Activated naive CD4-positive, alpha-beta T cell treated with anti-CD3 and anti-CD28 coated beads for 36 hours (primary cell): ENCODE measurements at regions of chr11 and their contacts with region 1.

Region 1: GRCh38 chr11:119334174-119334930 is at the start of gene RNF26:
- DNase-seq: peak; percentile 98
- H3K4me3 Mint-ChIP-seq: peak within 1 kb of the TSS; percentile 93
- H3K27ac Mint-ChIP-seq: peak within 1 kb of the TSS; percentile 91
- H3K4me1 Mint-ChIP-seq: peaks cover 31% of the 10 kb centered on the region
- H3K27me3 Mint-ChIP-seq: peaks cover 5% of the 10 kb centered on the region
- total RNA-seq, gene RNF26: 46.1 to 47.0 TPM

Region 2: GRCh38 chr11:119134389-119134978 is 199.9 kb before region 1 on chr11:
- CTCF ChIA-PET with region 1: no interaction called
- intact Hi-C with region 1: no loop called
- DNase-seq: no peak
- H3K4me3 Mint-ChIP-seq: no peak overlapping the region
- H3K27ac Mint-ChIP-seq: no peak overlapping the region
- H3K4me1 Mint-ChIP-seq: peaks cover 2% of the 10 kb centered on the region
- H3K27me3 Mint-ChIP-seq: peaks cover 3% of the 10 kb centered on the region

Region 3: GRCh38 chr11:119306373-119306890 is 27.9 kb before region 1 on chr11:
- CTCF ChIA-PET with region 1: interaction called, 15 read pairs
- intact Hi-C with region 1: loop called (anchors 2 kb)
- DNase-seq: peak; percentile 74
- H3K4me3 Mint-ChIP-seq: peak overlapping the region; percentile 60
- H3K27ac Mint-ChIP-seq: peak overlapping the region; percentile 93
- H3K4me1 Mint-ChIP-seq: peaks cover 32% of the 10 kb centered on the region
- H3K27me3 Mint-ChIP-seq: no peaks in the 10 kb centered on the region

Region 4: DNA sequence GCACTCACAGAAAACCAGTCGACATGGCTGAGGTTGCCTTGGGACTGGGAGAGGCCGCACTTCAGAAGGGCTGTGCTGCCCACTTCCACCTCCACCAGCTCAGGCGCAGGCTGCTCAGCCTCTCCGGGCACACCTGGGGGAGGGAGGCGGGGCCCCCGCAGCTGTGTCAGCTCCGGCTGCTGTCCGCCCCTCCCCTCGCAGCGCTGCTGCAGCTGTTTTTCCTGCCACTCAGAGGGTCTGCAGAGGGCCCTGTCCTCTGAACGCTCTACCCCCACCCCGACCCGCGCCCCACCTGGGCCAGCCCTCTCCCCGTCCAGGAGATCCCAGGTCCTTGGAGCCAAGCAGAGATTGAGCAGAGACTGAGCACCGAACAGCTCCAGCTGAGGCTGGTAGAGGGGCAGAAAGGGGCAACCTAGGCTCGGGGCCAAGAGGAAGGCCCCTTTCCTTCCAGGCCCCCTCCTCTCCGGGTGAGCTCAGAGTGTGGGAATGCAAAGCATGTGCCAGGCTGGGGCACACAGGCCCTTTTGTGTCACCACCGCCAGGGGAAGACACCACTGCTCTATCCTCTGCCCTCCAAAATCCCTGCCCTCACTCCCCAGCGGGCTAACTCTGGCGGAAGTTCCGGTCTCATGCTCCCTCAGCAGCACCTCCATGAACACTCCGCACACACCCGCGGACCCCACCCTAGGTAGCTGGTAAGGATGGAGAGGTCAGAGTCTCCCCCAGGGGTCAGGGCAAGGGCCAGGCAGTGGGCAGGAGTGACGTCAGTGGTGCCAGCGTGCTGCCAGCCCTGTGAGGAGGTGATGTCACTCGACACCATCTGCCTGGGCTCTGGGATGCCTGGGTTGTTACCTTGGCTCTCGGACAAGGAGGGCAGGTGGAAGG is 19.0 kb before region 1 on chr11:
- CTCF ChIA-PET with region 1: interaction called, 70 read pairs
- intact Hi-C with region 1: loop called (anchors 2 kb)
- DNase-seq: peak; percentile 62
- H3K4me3 Mint-ChIP-seq: peak overlapping the region; percentile 73
- H3K27ac Mint-ChIP-seq: no peak overlapping the region
- H3K4me1 Mint-ChIP-seq: peaks cover 15% of the 10 kb centered on the region
- H3K27me3 Mint-ChIP-seq: peaks cover 22% of the 10 kb centered on the region

Region 5: GRCh38 chr11:119381181-119381988 is 47.0 kb after region 1 on chr11 and contains the start of gene USP2:
- CTCF ChIA-PET with region 1: interaction called, 17 read pairs
- intact Hi-C with region 1: loop called (anchors 1 kb)
- DNase-seq: peak; percentile 97
- H3K4me3 Mint-ChIP-seq: no peak within 1 kb of the TSS
- H3K27ac Mint-ChIP-seq: no peak within 1 kb of the TSS
- H3K4me1 Mint-ChIP-seq: peaks cover 5% of the 10 kb centered on the region
- H3K27me3 Mint-ChIP-seq: no peaks in the 10 kb centered on the region
- total RNA-seq, gene USP2: 0.35 to 0.57 TPM